ENCODE measurements at regions of chr10 and their contacts with region 1.

Region 1: DNA sequence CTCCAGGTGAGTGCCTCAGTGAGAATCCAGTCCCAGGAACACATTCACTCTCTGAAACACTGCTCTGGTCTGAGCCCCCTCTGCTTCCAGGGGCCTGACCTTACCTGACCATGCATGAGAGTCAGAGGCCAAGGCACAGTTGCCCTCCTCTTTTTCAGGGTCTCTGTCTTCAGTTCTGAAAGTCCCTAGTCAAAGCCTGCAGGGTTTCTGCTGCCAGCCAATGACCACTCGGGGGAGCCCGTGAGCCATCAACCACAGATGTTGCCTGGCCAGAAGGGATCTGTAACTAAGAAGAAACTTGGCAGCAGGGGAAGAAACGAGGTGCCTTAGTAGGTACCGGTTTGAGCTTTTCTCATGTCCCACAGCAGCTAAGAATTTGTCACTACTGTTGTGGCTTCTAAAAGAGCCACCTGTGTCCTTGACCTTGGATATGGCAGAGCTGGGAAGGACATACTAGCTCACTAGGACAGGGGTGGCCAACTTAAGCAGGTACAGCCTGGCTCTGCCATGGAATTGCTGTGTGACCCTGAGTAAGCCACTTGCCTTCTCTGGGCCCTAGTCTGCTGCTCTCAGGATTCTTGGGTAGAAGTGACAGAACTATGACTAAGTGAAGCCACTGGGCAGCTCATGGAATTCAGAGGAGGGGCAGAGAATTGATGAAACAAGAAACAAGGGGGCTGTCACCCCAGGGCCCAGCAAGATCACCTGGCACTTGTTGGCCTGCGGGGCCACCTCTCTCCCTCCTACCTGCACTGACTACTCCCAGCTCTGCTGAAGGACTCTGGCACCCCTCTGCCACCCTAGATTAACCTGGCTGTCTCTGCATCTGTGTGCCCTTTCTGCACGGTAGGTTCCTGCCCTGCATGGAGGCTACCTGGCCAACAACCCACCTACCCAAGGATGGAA is 83.8 kb upstream of the GPR26 start:
- DNase-seq: peak; percentile 66
- H3K4me3 ChIP-seq: no peak overlapping the region
- H3K27ac ChIP-seq: no peak overlapping the region
- H3K4me1 ChIP-seq: no peaks in the 10 kb centered on the region
- CTCF ChIP-seq: peak; percentile 91

Region 2: GRCh38 chr10:123472606-123473005 is 109.7 kb before region 1 on chr10:
- CTCF ChIA-PET with region 1: no interaction called
- POLR2A ChIA-PET with region 1: no interaction called
- intact Hi-C with region 1: no loop called
- DNase-seq: no peak
- H3K4me3 ChIP-seq: no peak overlapping the region
- H3K27ac ChIP-seq: no peak overlapping the region
- H3K4me1 ChIP-seq: no peaks in the 10 kb centered on the region
- CTCF ChIP-seq: no peak

Region 3: GRCh38 chr10:123522702-123523312 is 59.5 kb before region 1 on chr10:
- CTCF ChIA-PET with region 1: no interaction called
- POLR2A ChIA-PET with region 1: no interaction called
- intact Hi-C with region 1: no loop called
- DNase-seq: peak; percentile 37
- H3K4me3 ChIP-seq: no peak overlapping the region
- H3K27ac ChIP-seq: no peak overlapping the region
- H3K4me1 ChIP-seq: peaks cover 11% of the 10 kb centered on the region
- CTCF ChIP-seq: no peak

Region 4: DNA sequence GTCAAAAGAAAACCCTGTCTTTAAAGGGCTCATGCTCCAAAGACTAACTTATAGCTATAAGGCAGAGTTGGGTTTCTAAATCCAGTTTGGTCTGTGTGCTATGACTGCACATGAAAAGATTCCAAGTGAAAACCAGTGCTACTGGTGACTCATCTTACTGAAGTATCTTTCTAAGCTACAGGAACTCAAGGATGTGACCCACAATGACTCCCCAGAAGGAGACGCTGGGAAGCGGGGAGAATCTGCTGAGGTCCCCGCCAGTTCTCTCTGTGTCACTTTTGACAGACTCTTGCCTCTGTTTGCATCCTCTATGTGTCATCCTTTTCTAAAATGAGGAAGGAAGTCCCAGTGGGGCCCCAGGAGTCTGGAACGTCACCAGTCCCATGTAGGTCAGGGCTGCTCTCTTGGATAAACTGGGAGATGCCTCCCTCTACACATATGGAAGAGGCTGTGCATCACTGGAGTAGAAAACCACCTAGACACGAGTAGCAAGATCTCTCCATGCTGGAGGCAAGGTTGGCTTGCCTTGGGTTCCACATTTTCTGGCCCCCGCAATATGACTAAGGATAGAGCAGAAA is 55.1 kb after region 1 on chr10:
- CTCF ChIA-PET with region 1: no interaction called
- POLR2A ChIA-PET with region 1: no interaction called
- intact Hi-C with region 1: no loop called
- DNase-seq: no peak
- H3K4me3 ChIP-seq: no peak overlapping the region
- H3K27ac ChIP-seq: no peak overlapping the region
- H3K4me1 ChIP-seq: no peaks in the 10 kb centered on the region
- CTCF ChIP-seq: no peak

Region 5: GRCh38 chr10:123967396-123968243 is 385.3 kb after region 1 on chr10:
- CTCF ChIA-PET with region 1: no interaction called
- POLR2A ChIA-PET with region 1: interaction called, 3 read pairs
- intact Hi-C with region 1: loop called (anchors 1 kb)
- DNase-seq: peak; percentile 50
- H3K4me3 ChIP-seq: no peak overlapping the region
- H3K27ac ChIP-seq: no peak overlapping the region
- H3K4me1 ChIP-seq: no peaks in the 10 kb centered on the region
- CTCF ChIP-seq: peak; percentile 96

Region 6: GRCh38 chr10:124403548-124403947 is 821.2 kb after region 1 on chr10:
- CTCF ChIA-PET with region 1: no interaction called
- POLR2A ChIA-PET with region 1: no interaction called
- intact Hi-C with region 1: loop called (anchors 10 kb)
- DNase-seq: peak; percentile 94
- H3K4me3 ChIP-seq: no peak overlapping the region
- H3K27ac ChIP-seq: peak overlapping the region; percentile 44
- H3K4me1 ChIP-seq: peaks cover 12% of the 10 kb centered on the region
- CTCF ChIP-seq: peak; percentile 86

Measured in OCI-LY7 (cell line).